PC-9 (cell line): ENCODE measurements at regions of chr9 and their contacts with region 1.

Region 1: GRCh38 chr9:115615821-115616665 is 498.1 kb upstream of the TNC start:
- DNase-seq: peak; percentile 59 to 97
- H3K4me3 ChIP-seq: peak overlapping the region; percentile 27; the same call in 1 of the 2 replicates
- H3K27ac ChIP-seq: peak overlapping the region; percentile 98
- H3K4me1 ChIP-seq: peaks cover 39% of the 10 kb centered on the region
- H3K27me3 ChIP-seq: no peaks in the 10 kb centered on the region
- CTCF ChIP-seq: no peak

Region 2: GRCh38 chr9:115912086-115912485 is 296.0 kb after region 1 on chr9:
- CTCF ChIA-PET with region 1: no interaction called
- POLR2A ChIA-PET with region 1: interaction called, 23 read pairs
- intact Hi-C with region 1: no loop called
- DNase-seq: no peak
- H3K4me3 ChIP-seq: no peak overlapping the region
- H3K27ac ChIP-seq: no peak overlapping the region
- H3K4me1 ChIP-seq: no peaks in the 10 kb centered on the region
- H3K27me3 ChIP-seq: no peaks in the 10 kb centered on the region
- CTCF ChIP-seq: no peak

Region 3: GRCh38 chr9:116008278-116008677 is 392.2 kb after region 1 on chr9:
- CTCF ChIA-PET with region 1: no interaction called
- POLR2A ChIA-PET with region 1: no interaction called
- intact Hi-C with region 1: loop called (anchors 5 kb)
- DNase-seq: peak; percentile 74 to 93
- H3K4me3 ChIP-seq: peak overlapping the region; percentile 17; the same call in 1 of the 2 replicates
- H3K27ac ChIP-seq: peak overlapping the region; percentile 84
- H3K4me1 ChIP-seq: peaks cover 55% of the 10 kb centered on the region
- H3K27me3 ChIP-seq: no peaks in the 10 kb centered on the region
- CTCF ChIP-seq: no peak